Calu3 (cell line): ENCODE measurements at regions of chr5 and their contacts with region 1.

Region 1: DNA sequence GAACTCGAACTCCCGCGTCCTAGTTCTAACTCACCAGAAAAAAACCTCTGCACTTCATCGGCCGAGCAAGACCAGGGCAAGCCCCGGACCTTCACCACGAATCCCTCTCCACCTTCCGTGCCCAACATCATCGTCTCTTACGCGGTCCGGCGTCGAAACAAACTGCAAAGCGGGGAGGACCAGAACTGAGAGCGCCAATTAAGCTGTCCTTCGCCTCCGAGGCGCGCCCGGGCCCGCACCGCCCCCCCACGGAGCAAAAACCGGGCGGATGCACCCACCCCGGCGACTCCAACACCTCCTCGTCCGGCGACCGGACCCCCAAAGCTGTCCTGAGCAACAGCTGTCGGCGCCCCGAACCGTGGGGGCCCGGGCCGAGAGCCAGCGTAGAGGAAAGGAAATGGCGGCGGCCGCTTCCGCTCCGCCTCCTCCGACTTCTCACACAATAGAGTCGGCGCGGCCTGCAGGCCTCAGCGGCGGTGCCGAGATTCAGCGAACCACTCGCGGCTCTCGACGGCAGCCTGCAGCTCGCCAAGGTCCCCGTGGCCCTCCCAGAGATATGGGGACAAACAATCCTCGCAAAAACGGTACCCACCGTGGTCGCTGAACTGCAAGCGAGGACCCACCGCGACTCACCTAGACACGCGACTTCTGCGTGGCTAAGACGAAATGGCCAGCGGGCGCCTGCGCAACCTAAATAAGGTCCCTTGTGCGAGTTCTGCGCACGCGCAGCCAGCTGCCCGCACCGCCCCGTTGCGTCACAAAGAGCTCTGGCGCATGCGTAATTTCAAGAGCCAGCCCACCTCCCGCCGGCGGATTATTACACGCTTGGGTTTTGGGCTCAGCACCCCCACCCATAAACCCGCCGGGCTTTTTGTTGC is at the start of gene HNRNPH1:
- DNase-seq: peak; percentile 99
- H3K4me3 Mint-ChIP-seq: peak within 1 kb of the TSS; percentile 96
- H3K27ac Mint-ChIP-seq: peak within 1 kb of the TSS; percentile 100
- H3K4me1 Mint-ChIP-seq: peaks cover 40% of the 10 kb centered on the region
- H3K27me3 Mint-ChIP-seq: peaks cover 7% of the 10 kb centered on the region
- CTCF ChIP-seq: no peak
- total RNA-seq, gene HNRNPH1: 765 and 870 TPM in 2 replicates

Region 2: GRCh38 chr5:179550511-179551230 is 72.6 kb before region 1 on chr5 and contains the start of gene RUFY1:
- CTCF ChIA-PET with region 1: no interaction called
- intact Hi-C with region 1: loop called (anchors 1 kb)
- DNase-seq: peak; percentile 93
- H3K4me3 Mint-ChIP-seq: peak within 1 kb of the TSS; percentile 87
- H3K27ac Mint-ChIP-seq: peak within 1 kb of the TSS; percentile 97
- H3K4me1 Mint-ChIP-seq: peaks cover 19% of the 10 kb centered on the region
- H3K27me3 Mint-ChIP-seq: no peaks in the 10 kb centered on the region
- CTCF ChIP-seq: no peak
- total RNA-seq, gene RUFY1: 41.2 and 41.5 TPM in 2 replicates

Region 3: GRCh38 chr5:179585941-179586655 is 37.1 kb before region 1 on chr5:
- CTCF ChIA-PET with region 1: no interaction called
- intact Hi-C with region 1: no loop called
- DNase-seq: no peak
- H3K4me3 Mint-ChIP-seq: no peak overlapping the region
- H3K27ac Mint-ChIP-seq: no peak overlapping the region
- H3K4me1 Mint-ChIP-seq: no peaks in the 10 kb centered on the region
- H3K27me3 Mint-ChIP-seq: no peaks in the 10 kb centered on the region
- CTCF ChIP-seq: no peak

Region 4: GRCh38 chr5:179806250-179807222 is 183.3 kb after region 1 on chr5 and contains the start of gene MGAT4B:
- CTCF ChIA-PET with region 1: no interaction called
- intact Hi-C with region 1: loop called (anchors 5 kb)
- DNase-seq: peak; percentile 87
- H3K4me3 Mint-ChIP-seq: peak within 1 kb of the TSS; percentile 95
- H3K27ac Mint-ChIP-seq: peak within 1 kb of the TSS; percentile 93
- H3K4me1 Mint-ChIP-seq: peaks cover 26% of the 10 kb centered on the region
- H3K27me3 Mint-ChIP-seq: no peaks in the 10 kb centered on the region
- CTCF ChIP-seq: no peak
- total RNA-seq, gene MGAT4B: 610 and 613 TPM in 2 replicates